ENCODE measurements at regions of chr17 and their contacts with region 1.

Region 1: DNA sequence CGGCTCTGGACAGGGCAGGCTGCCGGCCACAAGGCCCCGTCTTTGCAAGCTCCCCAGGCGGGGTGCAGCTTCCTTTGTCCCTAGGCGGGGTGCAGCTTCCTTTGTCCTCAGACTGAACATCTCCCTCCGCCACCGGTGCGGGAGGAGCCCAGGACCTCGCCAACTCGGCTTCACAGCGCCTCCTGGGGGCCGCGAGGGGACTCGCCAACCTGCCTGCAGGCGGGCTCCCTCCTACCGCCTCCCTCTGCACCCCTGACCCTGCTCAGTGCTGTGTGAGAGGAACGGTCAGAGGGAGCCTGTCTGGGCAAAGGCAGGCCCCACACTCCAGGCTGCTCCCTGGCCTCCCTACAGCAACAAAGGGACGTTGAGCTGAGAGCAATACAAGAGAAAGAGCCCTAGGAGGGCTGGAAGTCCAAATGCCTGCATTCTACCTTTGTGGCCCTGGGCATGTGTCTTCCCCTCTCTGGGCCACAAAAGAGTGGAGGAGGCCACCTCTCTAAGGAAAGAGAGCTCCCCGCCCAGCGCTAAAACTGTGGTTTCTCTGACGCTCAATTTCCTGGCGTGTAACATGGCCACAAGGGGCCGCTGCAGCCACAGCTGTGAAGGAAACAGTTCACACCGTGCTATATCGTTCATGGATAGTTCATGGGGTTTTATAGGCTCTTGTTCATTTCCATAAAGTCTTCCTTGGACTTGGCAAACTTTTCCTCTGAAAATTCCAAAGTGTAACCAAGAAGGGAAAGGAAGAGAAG is 20.9 kb upstream of the KRT19 start:
- DNase-seq: peak; percentile 94 to 96
- ATAC-seq: peak; percentile 79 to 91
- H3K4me3 ChIP-seq: peak overlapping the region; percentile 33
- H3K27ac ChIP-seq: peak overlapping the region; percentile 89 to 96
- H3K4me1 ChIP-seq: peaks cover 40% of the 10 kb centered on the region
- CTCF ChIP-seq: peak; percentile 99
- EP300 ChIP-seq: no peak
- POLR2A ChIP-seq: peak; percentile 16; the same call in 1 of the 2 replicates
- RAD21 ChIP-seq: peak; percentile 93 to 97

Region 2: GRCh38 chr17:40803617-40804082 is 745.4 kb before region 1 on chr17:
- CTCF ChIA-PET with region 1: interaction called, 86 read pairs
- POLR2A ChIA-PET with region 1: no interaction called
- DNase-seq: peak; percentile 88 to 96
- ATAC-seq: peak; percentile 99
- H3K4me3 ChIP-seq: no peak overlapping the region
- H3K27ac ChIP-seq: peak overlapping the region; percentile 27 to 56; a peak in 4 of 6 replicates
- H3K4me1 ChIP-seq: peaks cover 7% of the 10 kb centered on the region
- CTCF ChIP-seq: peak; percentile 98
- EP300 ChIP-seq: no peak
- POLR2A ChIP-seq: no peak
- RAD21 ChIP-seq: peak; percentile 100

Region 3: GRCh38 chr17:40884708-40885512 is 664.1 kb before region 1 on chr17 and contains the start of gene KRT20:
- CTCF ChIA-PET with region 1: interaction called, 11 read pairs
- POLR2A ChIA-PET with region 1: no interaction called
- DNase-seq: peak in 1 of 2 experiments; percentile 64
- ATAC-seq: peak; percentile 62 to 79; a peak in 4 of 6 replicates
- H3K4me3 ChIP-seq: no peak within 1 kb of the TSS
- H3K27ac ChIP-seq: peak within 1 kb of the TSS in 1 of 2 experiments; percentile 31; a peak in 1 of 6 replicates
- H3K4me1 ChIP-seq: peaks cover 15% of the 10 kb centered on the region
- CTCF ChIP-seq: 0 out of 3 replicates have a peak, but pooled peaks have one; percentile 17
- EP300 ChIP-seq: no peak
- POLR2A ChIP-seq: no peak
- RAD21 ChIP-seq: no peak
- polyA plus RNA-seq, gene KRT20: 0.28 and 0.34 TPM in 2 replicates

Region 4: DNA sequence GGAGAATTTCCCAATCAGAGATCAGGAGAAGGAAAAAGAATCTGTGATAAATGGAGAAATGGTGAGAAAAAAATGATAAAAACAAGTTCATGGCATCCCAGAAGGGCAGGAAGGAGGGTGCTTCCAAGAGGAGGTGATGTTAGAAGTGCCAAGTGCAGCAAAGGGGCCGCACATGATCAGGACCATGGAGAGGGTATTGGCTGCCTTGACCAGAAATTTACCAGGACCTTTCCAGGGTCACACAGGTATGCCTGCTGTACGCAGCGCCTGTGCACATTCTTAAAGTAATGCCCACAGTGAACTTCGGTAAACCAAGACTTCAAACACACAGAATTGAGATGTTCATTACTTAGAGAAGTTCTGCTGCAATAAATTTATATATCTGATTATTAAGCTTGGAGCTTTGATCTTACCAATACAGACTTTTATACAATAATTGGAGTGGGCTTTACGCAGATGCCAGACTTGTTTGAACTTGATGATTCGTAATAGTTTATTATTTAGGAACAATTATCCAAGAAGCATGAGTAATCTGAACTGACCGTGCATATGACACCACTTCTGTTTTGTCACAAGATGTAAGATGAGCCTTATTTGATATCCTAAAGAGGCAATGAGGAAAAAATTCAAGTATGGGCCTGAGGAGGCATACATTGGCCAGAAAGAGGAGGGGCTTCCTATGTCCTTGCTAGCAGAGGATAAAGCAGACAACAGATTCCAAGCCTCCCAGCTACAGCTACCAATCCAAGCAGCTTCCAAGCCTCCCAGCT is 196.2 kb before region 1 on chr17:
- CTCF ChIA-PET with region 1: interaction called, 14 read pairs
- POLR2A ChIA-PET with region 1: no interaction called
- DNase-seq: no peak
- ATAC-seq: peak in 1 of 2 experiments; percentile 47; a peak in 1 of 6 replicates
- H3K4me3 ChIP-seq: no peak overlapping the region
- H3K27ac ChIP-seq: no peak overlapping the region
- H3K4me1 ChIP-seq: no peaks in the 10 kb centered on the region
- CTCF ChIP-seq: no peak
- EP300 ChIP-seq: no peak
- POLR2A ChIP-seq: no peak
- RAD21 ChIP-seq: no peak

Region 5: DNA sequence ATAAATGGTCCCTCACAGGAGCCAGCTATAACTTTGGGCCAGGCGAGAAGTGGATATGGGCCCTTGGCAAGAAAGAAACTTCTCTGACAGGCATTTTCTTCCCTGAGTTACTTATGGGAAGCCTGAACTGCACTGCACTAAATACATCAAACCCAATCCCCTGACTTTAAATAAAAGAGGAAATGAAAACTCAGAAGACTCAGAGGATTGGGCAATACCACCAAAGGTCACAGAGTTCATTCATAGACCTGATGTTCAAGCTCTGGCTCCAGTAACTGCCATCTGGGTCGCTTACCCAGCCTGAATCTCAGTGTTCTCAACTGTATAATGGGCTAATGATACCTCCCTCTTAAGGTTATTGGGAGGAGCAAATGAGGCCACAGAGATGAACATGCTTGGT is 68.9 kb before region 1 on chr17:
- CTCF ChIA-PET with region 1: interaction called, 20 read pairs
- POLR2A ChIA-PET with region 1: no interaction called
- DNase-seq: no peak
- ATAC-seq: no peak
- H3K4me3 ChIP-seq: no peak overlapping the region
- H3K27ac ChIP-seq: no peak overlapping the region
- H3K4me1 ChIP-seq: no peaks in the 10 kb centered on the region
- CTCF ChIP-seq: no peak
- EP300 ChIP-seq: no peak
- POLR2A ChIP-seq: no peak
- RAD21 ChIP-seq: no peak

Region 6: DNA sequence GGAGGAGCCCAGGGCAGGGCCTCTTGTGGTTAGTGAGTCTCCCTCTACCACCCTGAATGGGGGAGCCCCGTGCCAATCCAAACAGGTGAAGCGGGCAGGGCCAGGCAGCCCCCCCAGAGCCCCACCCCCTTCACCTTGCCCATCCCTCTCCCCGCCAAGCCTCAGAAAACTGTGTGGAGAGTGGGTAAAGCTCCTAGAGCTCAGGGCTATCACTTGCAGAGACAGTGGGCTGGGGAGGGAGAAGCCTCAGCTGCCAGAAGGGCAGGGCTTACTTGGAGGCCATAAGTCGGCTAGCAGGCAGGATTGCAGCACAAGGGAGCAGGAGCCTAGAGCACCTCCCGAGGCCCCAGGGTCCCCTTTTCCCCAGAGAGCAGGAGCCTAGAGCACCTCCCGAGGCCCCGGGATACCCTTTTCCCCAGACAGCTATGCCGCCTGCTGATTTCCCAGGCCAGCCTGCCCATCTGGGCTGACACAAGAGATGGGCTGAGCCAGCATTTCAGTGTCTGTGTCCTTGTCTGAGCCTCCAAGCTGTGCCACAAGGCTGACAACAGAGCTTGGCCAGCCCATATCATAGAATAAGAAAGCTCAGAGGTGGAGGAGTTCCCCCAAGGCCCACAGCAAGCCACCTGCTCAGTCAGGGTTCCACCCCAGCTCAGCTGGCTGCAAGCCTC is 44.4 kb after region 1 on chr17:
- CTCF ChIA-PET with region 1: interaction called, 18 read pairs
- POLR2A ChIA-PET with region 1: no interaction called
- DNase-seq: no peak
- ATAC-seq: peak in 1 of 2 experiments; percentile 27; a peak in 2 of 6 replicates
- H3K4me3 ChIP-seq: no peak overlapping the region
- H3K27ac ChIP-seq: no peak overlapping the region
- H3K4me1 ChIP-seq: no peaks in the 10 kb centered on the region
- CTCF ChIP-seq: no peak
- EP300 ChIP-seq: no peak
- POLR2A ChIP-seq: no peak
- RAD21 ChIP-seq: no peak

Measured in A549 (cell line).